HepG2 (cell line): ENCODE measurements at regions of chr4 and their contacts with region 1.

Region 1: GRCh38 chr4:153573881-153574802 is 108.0 kb downstream of the TMEM131L start:
- DNase-seq: peak; percentile 63
- ATAC-seq: peak; percentile 90
- H3K4me3 ChIP-seq: no peak overlapping the region
- H3K27ac ChIP-seq: no peak overlapping the region
- H3K4me1 ChIP-seq: peaks cover 44% of the 10 kb centered on the region
- H3K27me3 ChIP-seq: no peaks in the 10 kb centered on the region
- CTCF ChIP-seq: peak; percentile 88
- EP300 ChIP-seq: no peak
- POLR2A ChIP-seq: no peak
- RAD21 ChIP-seq: peak; percentile 82

Region 2: GRCh38 chr4:153153339-153153871 is 420.7 kb before region 1 on chr4:
- CTCF ChIA-PET with region 1: no interaction called
- POLR2A ChIA-PET with region 1: no interaction called
- in situ Hi-C with region 1: loop called (anchors 10 kb)
- intact Hi-C with region 1: no loop called
- DNase-seq: no peak
- ATAC-seq: peak; percentile 89
- H3K4me3 ChIP-seq: peak overlapping the region; percentile 31 to 67 (median 50)
- H3K27ac ChIP-seq: no peak overlapping the region
- H3K4me1 ChIP-seq: peaks cover 18% of the 10 kb centered on the region
- H3K27me3 ChIP-seq: peaks cover 6 to 49% of the 10 kb centered on the region in 2 experiments
- CTCF ChIP-seq: no peak
- EP300 ChIP-seq: no peak
- POLR2A ChIP-seq: no peak
- RAD21 ChIP-seq: no peak

Region 3: DNA sequence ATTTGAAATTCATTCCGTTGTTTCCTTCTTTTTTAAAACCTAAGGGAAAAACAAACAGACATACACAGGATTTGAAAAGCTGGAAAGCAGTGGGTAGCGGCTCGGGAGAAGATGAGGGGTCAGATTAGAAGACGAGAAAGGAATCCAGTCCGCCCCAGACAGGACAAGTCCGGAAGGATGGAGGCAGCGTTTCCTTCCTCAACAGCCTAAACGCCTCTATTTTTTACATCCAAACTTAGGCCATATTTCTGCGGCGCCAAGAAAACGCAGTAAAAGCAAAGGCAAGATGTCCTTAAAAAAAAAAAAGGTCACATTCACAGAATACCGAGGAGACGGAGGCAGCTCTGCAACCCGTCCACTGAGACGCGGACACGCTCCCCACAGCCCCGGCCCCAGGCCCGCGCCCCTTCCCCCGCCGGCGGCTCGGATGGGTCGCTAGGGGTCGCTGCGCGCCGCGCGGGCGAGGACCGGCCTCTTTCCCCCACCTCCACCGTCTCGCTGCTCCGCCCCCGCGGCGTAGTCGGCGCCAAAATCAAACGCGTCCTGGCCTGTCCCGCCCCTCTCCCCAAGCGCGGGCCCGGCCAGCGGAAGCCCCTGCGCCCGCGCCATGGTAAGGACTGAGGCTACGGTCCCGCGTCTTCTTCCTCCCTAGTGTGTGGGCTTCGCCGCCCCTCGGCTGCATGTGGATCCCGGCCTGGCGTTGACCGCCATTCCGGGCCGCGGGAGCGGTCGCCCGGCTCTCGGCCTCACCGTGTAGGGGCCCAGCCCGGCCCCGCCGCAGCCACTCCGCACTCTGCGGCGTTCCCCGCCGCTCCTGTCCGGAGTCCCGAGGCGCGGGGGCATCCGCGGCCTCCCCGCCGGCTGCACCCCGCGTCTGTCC is 229.8 kb before region 1 on chr4 and contains the start of gene MND1:
- CTCF ChIA-PET with region 1: interaction called, 31 read pairs
- POLR2A ChIA-PET with region 1: no interaction called
- in situ Hi-C with region 1: loop called (anchors 5 kb)
- intact Hi-C with region 1: loop called (anchors 1 kb)
- DNase-seq: peak; percentile 64
- ATAC-seq: peak; percentile 90
- H3K4me3 ChIP-seq: peak within 1 kb of the TSS; percentile 79 to 83 (median 81)
- H3K27ac ChIP-seq: peak within 1 kb of the TSS; percentile 72
- H3K4me1 ChIP-seq: peaks cover 44% of the 10 kb centered on the region
- H3K27me3 ChIP-seq: no peaks in the 10 kb centered on the region; a peak in 1 of 5 replicates
- CTCF ChIP-seq: peak; percentile 86
- EP300 ChIP-seq: peak in 1 of 2 experiments; percentile 20; a peak in 1 of 4 replicates
- POLR2A ChIP-seq: peak; percentile 69 to 74
- RAD21 ChIP-seq: peak; percentile 88
- total RNA-seq, gene MND1: 30.7 and 40.7 TPM in 2 replicates

Region 4: DNA sequence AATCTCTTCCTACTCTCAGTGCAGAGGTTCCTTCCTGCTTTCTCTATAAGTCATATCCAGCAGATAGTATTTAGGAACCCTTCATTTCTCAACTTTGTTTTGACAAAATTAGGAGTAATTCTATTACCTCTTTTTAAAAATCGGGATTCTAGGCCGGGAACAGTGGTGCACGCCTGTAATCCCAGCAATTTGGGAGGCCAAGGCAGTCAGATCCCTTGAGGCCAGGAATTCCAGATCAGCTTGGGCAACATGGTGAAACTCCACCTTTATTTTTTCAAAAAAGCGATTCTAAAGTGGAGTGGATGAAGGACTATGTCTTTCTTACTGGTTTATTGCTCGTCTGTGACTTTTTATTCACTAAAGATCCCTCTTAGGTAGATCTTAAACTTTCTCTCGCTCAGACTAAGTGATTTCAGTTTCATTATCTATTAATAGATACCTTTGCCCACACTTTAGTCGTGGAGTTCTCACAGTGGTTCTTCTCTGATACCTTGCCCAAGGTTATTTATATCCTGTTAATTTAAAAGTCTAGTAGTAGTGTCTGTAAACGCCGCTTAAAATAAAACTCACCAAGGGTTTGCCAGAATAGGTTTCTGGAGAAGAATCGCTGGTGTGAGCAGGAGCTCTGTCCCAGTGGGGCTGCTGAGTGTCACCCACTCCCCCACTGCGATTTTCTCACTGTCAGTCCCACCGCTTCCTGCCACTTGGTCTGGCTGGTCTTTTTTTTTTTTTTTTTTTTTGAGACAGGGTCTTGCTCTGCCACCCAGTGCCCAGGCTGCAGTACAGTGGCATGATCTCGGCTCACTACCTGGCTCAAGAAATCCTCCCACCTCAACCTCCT is 135.0 kb before region 1 on chr4:
- CTCF ChIA-PET with region 1: interaction called, 21 read pairs
- POLR2A ChIA-PET with region 1: no interaction called
- in situ Hi-C with region 1: loop called (anchors 5 kb)
- intact Hi-C with region 1: no loop called
- DNase-seq: no peak
- ATAC-seq: no peak
- H3K4me3 ChIP-seq: no peak overlapping the region
- H3K27ac ChIP-seq: no peak overlapping the region
- H3K4me1 ChIP-seq: no peaks in the 10 kb centered on the region
- H3K27me3 ChIP-seq: no peaks in the 10 kb centered on the region
- CTCF ChIP-seq: no peak
- EP300 ChIP-seq: no peak
- POLR2A ChIP-seq: no peak
- RAD21 ChIP-seq: no peak